ENCODE measurements at regions of chr17 and their contacts with region 1.

Region 1: GRCh38 chr17:51153210-51154072 is at the start of gene NME1:
- DNase-seq: peak; percentile 94 to 100 (median 96)

Region 2: GRCh38 chr17:50853015-50853615 is 300.3 kb before region 1 on chr17:
- intact Hi-C with region 1: loop called (anchors 10 kb)
- DNase-seq: no peak

Region 3: DNA sequence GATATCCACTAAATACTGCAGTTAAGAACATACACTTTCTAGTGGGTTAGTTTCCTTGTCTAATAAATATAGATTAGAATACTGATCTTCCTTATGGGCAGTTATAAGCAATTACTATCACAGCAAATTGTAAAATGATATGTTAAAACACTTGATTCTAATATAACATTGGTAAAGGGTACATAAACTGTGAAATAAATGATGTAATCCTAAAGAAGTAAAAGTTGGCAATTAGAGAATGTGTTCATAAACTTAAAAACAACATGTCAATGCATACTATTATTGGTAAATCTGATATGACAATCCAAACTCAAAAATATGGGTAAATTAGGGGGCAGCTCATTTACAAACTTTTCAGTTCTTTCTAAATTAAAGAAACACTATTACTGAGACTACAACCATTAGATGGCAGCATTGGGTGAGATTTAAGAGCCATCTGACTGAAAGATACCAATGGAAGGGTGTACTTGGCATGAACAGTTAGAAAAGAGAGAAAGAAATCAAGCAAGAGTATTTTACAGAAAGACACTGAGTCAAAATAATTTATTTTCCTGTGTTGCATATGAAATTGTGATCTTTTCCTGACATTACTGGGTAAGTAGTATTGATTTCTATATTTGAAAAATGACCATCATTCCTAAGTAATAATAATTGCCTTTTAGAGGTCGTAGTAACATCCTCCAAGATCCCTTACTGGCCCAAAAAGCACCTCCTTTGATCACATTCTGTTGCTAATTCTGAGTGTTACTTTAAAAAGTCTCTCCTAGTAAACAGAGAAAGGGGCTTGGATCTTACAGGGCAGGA is 152.4 kb before region 1 on chr17:
- intact Hi-C with region 1: loop called (anchors 1 kb)
- DNase-seq: no peak

Region 4: DNA sequence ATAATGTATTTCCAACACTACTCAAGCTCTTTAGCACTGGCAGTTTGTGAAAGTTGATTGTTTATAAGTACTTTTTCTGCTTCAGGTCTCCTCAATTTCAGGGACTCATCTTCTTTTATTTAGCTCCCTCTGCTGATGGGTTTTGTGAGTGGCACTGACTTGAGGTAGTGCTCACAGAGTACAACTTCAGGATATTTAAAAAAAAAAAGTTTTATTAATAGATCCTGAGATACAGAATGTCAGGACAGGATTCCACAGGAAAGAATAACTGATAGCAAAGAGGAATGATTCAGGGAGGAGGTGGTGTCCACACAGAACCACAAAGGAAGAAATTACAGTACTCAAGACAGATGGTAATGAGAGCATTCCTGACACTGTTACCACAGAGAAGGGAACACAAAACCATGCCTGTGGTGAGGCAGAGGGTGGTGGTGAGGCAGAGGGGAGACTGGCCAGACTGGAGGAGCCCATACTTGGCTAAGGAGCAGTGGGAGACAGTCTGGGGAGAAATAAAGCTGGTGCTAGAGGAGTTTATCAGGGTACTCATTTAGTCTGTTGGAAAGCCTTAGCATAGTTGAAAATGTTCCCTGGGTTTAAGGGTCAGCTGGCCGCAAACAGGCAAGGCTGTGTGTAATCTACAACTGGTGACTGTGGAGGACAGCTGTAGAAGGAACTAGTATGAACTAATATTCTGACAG is 96.5 kb before region 1 on chr17:
- intact Hi-C with region 1: loop called (anchors 2 kb)
- DNase-seq: peak in 1 of 10 donors; percentile 35

Region 5: DNA sequence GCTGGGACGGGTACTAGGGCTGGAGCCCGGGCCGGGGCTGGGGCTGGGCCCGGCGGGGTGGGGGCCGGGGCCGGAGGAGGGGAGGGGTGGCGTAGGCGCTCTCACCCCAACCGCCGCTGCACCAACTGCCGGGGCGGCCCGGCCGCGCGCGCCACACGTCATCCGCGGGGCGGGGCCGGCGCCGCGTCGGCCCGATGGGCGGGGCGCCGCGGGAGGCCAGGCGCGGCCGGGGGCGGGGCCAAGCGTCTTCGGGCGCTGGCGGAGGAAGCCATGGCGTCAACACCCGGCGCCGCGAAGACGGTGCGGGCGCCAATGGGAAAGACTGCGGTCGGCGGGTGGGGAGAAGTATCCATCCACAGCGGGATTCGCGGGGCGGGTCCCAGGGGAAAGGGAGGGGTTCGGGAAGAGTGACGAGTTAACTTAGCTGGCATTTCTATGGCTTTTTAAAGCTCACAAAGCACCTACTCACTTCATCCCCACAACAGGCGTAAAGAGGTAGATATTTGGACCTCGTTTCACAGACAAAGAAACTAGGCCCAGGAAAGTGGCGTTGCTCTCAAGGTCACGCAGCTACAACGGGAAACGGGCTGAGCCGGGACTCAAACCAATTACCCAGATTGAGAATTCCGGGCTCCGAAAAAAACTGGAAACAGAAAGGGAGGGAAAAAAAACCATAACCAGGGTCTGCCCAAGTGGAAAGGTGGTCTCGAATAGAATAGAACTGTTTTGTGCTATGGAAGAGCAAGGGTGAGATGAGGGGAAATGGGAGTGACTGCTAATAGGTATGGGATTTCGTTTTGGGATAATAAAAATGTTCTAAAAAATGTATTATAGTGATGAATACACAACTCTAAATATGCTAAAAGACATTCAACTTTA is 32.5 kb before region 1 on chr17 and contains the start of gene SPAG9:
- intact Hi-C with region 1: loop called (anchors 2 kb)
- DNase-seq: peak; percentile 81 to 99 (median 93)